Caco-2 (cell line): ENCODE measurements at regions of chr11 and their contacts with region 1.

Region 1: DNA sequence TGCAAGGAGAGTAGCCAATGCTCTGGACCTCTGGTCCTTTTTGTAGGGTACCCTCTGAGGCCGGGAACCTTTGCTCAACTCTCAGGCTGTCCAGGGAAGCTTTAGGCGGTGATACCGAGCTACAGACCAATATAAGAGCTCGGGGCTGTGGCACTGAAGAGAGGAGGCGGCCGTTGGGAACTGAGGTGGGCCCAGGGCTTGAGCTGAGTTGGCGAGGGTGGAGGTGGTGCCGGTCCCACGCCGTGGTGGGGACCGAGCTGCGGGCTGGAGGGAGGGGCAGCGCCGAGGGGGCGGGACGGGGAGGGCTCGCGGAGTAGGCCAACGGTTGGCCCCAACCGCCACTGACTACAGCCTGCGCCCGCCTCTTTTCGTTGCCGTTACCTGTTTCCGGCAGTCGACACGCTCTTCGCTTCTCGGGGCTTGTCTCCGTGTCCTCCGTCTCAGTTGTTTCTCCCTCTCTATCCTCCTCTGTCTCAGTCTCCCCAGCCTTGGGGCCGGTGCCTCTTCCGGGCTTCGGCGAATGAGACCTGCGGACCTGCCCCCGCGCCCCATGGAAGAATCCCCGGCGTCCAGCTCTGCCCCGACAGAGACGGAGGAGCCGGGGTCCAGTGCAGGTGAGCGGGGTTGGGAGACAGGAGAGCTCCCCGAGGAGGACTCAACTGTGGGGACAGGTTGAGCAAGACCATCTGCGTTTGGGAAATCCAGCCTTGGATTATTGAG is at the start of gene NEU3:
- DNase-seq: peak; percentile 89 to 93
- H3K4me3 ChIP-seq: peak within 1 kb of the TSS; percentile 61
- H3K4me3 Mint-ChIP-seq: peak within 1 kb of the TSS; percentile 85
- H3K27ac Mint-ChIP-seq: peak within 1 kb of the TSS; percentile 82
- H3K4me1 ChIP-seq: peaks cover 22% of the 10 kb centered on the region
- H3K4me1 Mint-ChIP-seq: peaks cover 28% of the 10 kb centered on the region
- H3K27me3 ChIP-seq: no peaks in the 10 kb centered on the region
- H3K27me3 Mint-ChIP-seq: no peaks in the 10 kb centered on the region
- CTCF ChIP-seq: no peak
- total RNA-seq, gene NEU3: 19.3 and 21.8 TPM in 2 replicates

Region 2: DNA sequence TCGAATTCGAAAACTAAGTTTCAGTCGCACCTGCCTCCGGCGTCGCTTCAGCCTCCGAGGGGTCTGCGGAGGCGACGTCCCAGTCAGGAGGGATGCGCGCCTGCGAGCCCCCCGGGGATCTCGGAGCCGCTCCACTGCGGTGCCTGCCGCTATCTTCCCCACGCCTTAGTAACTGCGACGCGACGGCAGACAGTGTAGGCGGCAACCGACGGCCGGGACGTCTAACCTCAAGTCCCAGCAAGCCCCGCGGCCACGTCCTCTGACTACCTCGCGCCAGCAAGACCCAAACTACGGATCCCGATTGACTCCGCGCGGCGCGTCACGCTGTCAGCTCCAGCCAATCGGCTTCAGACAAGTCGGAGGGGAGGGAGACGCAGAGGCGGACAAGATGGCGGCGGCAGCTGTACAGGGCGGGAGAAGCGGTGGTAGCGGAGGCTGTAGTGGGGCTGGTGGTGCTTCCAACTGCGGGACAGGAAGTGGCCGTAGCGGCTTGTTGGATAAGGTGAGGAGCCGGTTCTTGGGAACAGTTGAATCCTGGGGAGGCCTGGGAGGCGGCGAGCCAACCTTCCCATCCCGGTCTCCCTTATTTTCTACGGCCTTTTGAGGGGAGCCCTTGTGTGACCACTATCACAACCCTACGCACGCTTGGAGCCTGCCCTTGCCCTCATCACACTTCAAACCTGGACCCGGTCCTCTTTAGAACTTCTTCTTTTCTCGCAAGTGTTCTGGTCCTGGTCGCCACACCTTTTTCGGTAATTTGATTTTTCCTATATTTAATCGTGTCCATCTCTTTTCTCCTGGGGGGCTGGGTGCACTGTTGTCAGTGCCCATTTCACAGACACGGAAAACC is 39.6 kb before region 1 on chr11 and contains the starts of genes SPCS2 and XRRA1:
- CTCF ChIA-PET with region 1: no interaction called
- POLR2A ChIA-PET with region 1: interaction called, 13 read pairs
- intact Hi-C with region 1: loop called (anchors 1 kb)
- DNase-seq: peak; percentile 100
- H3K4me3 ChIP-seq: peak within 1 kb of the TSS; percentile 71
- H3K4me3 Mint-ChIP-seq: peak within 1 kb of the TSS; percentile 98
- H3K27ac Mint-ChIP-seq: peak within 1 kb of the TSS; percentile 99
- H3K4me1 ChIP-seq: peaks cover 5% of the 10 kb centered on the region
- H3K4me1 Mint-ChIP-seq: no peaks in the 10 kb centered on the region
- H3K27me3 ChIP-seq: no peaks in the 10 kb centered on the region
- H3K27me3 Mint-ChIP-seq: no peaks in the 10 kb centered on the region
- CTCF ChIP-seq: no peak
- total RNA-seq, gene SPCS2: 309 and 328 TPM in 2 replicates
- total RNA-seq, gene XRRA1: 9.7 and 11.9 TPM in 2 replicates

Region 3: DNA sequence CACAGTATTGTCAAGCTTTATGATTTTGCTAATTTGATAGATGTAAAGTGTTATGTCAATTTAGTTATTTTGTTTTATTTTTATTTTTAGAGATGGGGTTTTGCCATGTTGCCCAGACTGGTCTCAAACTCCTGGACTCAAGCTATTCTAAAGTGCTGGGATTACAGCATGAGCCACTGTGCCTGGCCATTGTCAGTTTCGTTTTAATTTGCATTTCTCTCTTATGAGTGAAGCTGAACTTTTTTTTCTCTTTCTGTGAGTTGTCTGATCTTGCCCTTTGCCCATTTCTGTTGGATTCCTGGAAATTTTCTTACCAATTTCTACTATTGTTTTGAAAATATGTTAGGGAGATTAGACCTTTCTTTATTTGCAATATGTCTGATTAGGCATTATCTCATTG is 15.5 kb after region 1 on chr11:
- CTCF ChIA-PET with region 1: no interaction called
- POLR2A ChIA-PET with region 1: no interaction called
- intact Hi-C with region 1: loop called (anchors 2 kb)
- DNase-seq: no peak
- H3K4me3 ChIP-seq: no peak overlapping the region
- H3K4me3 Mint-ChIP-seq: no peak overlapping the region
- H3K27ac Mint-ChIP-seq: no peak overlapping the region
- H3K4me1 ChIP-seq: no peaks in the 10 kb centered on the region
- H3K4me1 Mint-ChIP-seq: no peaks in the 10 kb centered on the region
- H3K27me3 ChIP-seq: no peaks in the 10 kb centered on the region
- H3K27me3 Mint-ChIP-seq: no peaks in the 10 kb centered on the region
- CTCF ChIP-seq: no peak

Region 4: GRCh38 chr11:75022759-75023396 is 34.2 kb after region 1 on chr11:
- CTCF ChIA-PET with region 1: interaction called, 16 read pairs
- POLR2A ChIA-PET with region 1: interaction called, 3 read pairs
- intact Hi-C with region 1: no loop called
- DNase-seq: peak; percentile 89 to 93
- H3K4me3 ChIP-seq: no peak overlapping the region
- H3K4me3 Mint-ChIP-seq: no peak overlapping the region
- H3K27ac Mint-ChIP-seq: no peak overlapping the region
- H3K4me1 ChIP-seq: no peaks in the 10 kb centered on the region
- H3K4me1 Mint-ChIP-seq: no peaks in the 10 kb centered on the region
- H3K27me3 ChIP-seq: no peaks in the 10 kb centered on the region
- H3K27me3 Mint-ChIP-seq: no peaks in the 10 kb centered on the region
- CTCF ChIP-seq: peak; percentile 99 to 100